Activated CD8-positive, alpha-beta T cell treated with anti-CD3 and anti-CD28 coated beads for 36 hours (primary cell): ENCODE measurements at regions of chr1 and their contacts with region 1.

Region 1: DNA sequence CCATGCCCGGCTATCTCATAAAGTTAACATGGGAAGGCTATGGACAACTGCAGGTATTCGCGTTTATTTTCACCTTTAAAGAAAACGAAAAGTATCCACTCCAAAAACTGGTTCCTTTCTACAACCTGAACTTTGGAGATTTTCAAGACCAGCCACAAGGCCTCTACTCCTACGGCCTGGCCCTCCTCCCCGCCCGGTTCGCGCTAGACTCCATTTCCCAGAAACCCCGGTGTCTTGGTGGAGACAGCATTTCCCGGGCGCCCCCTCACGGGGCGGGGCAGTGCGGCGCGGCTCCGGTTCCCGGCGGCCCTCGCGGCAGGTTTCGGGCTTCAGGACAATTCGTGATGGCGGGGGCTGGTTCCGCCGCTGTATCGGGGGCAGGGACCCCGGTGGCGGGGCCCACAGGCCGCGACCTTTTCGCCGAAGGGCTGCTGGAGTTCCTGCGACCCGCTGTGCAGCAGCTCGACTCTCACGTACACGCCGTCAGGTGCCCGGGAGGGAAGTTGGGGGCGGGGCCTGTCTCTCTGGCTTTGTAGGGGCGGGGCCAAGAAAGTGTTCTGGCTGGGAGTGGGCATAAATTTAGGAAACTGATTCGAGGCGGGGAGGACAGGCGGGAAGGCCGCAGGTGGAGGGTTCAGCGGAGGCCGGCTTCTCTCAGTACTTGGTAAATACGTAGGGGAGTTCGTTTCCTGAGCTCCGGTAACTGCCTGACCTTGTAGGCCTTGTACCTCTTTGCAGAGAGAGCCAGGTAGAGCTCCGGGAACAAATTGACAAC is at the start of gene SNAPIN:
- DNase-seq: peak; percentile 96
- ATAC-seq: peak; percentile 95
- H3K4me3 Mint-ChIP-seq: peak within 1 kb of the TSS; percentile 98
- H3K27ac Mint-ChIP-seq: peak within 1 kb of the TSS; percentile 96
- H3K4me1 Mint-ChIP-seq: peaks cover 12% of the 10 kb centered on the region
- H3K27me3 Mint-ChIP-seq: no peaks in the 10 kb centered on the region
- CTCF ChIP-seq: no peak
- total RNA-seq, gene SNAPIN: 25.7 to 27.3 TPM

Region 2: DNA sequence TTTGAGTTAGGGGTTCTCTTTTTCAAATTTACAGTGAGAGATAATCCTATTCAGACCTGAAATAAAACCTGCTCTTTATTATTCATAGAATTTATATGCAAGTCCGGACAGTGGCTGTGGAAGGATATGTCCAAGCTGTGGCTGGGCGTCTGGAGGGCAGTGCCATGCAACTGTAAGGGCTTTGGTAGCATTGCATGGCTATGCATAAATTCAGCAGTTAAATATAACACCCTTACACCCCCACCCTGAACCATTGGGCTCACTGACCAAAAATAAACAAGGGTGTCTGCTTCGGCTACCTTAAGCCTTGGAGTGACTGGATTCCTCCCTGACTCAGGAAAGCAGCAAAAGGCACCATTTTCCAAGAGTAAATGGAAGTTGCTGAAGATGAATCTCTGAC is 19.3 kb before region 1 on chr1:
- CTCF ChIA-PET with region 1: interaction called, 7 read pairs
- POLR2A ChIA-PET with region 1: interaction called, 72 read pairs
- intact Hi-C with region 1: no loop called
- DNase-seq: no peak
- ATAC-seq: no peak
- H3K4me3 Mint-ChIP-seq: no peak overlapping the region
- H3K27ac Mint-ChIP-seq: no peak overlapping the region
- H3K4me1 Mint-ChIP-seq: peaks cover 50% of the 10 kb centered on the region
- H3K27me3 Mint-ChIP-seq: no peaks in the 10 kb centered on the region
- CTCF ChIP-seq: no peak

Region 3: DNA sequence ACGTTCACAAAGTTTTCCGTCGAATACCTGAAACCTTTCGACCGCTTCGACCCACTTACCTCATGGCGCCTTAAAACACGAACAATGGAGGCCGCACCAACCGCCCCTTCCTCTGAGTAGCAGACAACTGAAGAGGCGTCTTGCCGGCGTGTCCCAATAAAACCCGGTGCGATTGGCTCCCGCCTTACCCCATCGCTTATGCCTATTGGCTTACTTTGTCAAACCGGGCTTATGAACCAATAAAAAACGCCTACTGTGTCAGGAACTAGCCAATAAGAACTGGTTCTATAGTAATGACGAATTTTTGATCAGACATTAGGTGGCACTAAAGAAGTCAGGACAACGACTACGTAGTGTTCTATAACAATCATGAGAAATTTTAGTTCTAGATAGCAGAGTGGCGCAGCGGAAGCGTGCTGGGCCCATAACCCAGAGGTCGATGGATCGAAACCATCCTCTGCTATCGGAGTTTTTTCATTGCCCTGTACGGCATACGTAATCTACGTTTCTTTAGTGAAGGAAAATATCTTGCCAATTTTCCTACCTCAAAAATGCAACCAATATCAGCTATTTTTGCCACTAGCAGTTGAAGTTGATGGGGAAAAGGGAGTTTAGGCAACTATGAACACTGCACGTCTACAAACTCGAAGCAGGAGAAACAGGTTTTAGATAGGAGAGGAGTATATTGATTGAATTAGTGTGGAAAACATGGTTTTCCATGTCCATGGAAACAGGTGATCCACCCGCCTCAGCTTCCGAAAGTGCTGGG is 12.5 kb after region 1 on chr1 and contains the start of gene ILF2:
- CTCF ChIA-PET with region 1: interaction called, 3 read pairs
- POLR2A ChIA-PET with region 1: interaction called, 12 read pairs
- intact Hi-C with region 1: no loop called
- DNase-seq: peak; percentile 99
- ATAC-seq: peak; percentile 90
- H3K4me3 Mint-ChIP-seq: no peak within 1 kb of the TSS
- H3K27ac Mint-ChIP-seq: no peak within 1 kb of the TSS
- H3K4me1 Mint-ChIP-seq: peaks cover 26% of the 10 kb centered on the region
- H3K27me3 Mint-ChIP-seq: no peaks in the 10 kb centered on the region
- CTCF ChIP-seq: no peak
- total RNA-seq, gene ILF2: 328 to 333 TPM